H1 (cell line): ENCODE measurements at regions of chr4 and their contacts with region 1.

Region 1: DNA sequence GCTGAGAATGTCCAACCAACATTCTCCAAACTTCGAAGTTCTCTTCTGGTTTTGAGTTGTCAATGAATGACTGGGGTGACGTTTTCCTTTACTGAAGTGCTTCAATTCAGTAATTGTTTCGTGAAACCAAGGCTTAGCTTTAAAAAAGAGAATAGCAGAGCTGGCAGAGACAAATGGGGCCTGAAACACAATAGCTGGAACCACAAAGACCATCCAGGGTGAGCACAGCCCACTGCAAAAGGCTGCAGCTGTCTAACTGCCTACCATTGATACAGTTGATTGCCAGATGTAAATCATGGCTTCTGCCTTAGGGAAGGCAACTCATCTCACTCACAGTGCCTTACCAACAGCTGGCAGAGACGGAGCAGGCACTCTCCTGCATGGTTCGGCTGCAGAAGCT is 78.7 kb upstream of the ZNF518B start:
- DNase-seq: no peak
- H3K4me3 ChIP-seq: no peak overlapping the region
- H3K27ac ChIP-seq: no peak overlapping the region
- H3K4me1 ChIP-seq: peaks cover 0 to 3% (median 2%) of the 10 kb centered on the region in 4 experiments; a peak in 3 of 7 replicates
- H3K27me3 ChIP-seq: no peaks in the 10 kb centered on the region
- CTCF ChIP-seq: no peak
- EP300 ChIP-seq: no peak
- POLR2A ChIP-seq: no peak
- RAD21 ChIP-seq: no peak

Region 2: GRCh38 chr4:10151182-10151581 is 384.7 kb before region 1 on chr4:
- CTCF ChIA-PET with region 1: interaction called, 11 read pairs
- POLR2A ChIA-PET with region 1: no interaction called
- DNase-seq: no peak
- H3K4me3 ChIP-seq: no peak overlapping the region
- H3K27ac ChIP-seq: no peak overlapping the region
- H3K4me1 ChIP-seq: no peaks in the 10 kb centered on the region
- H3K27me3 ChIP-seq: no peaks in the 10 kb centered on the region; a peak in 1 of 7 replicates
- CTCF ChIP-seq: no peak
- EP300 ChIP-seq: no peak
- POLR2A ChIP-seq: no peak
- RAD21 ChIP-seq: no peak

Region 3: DNA sequence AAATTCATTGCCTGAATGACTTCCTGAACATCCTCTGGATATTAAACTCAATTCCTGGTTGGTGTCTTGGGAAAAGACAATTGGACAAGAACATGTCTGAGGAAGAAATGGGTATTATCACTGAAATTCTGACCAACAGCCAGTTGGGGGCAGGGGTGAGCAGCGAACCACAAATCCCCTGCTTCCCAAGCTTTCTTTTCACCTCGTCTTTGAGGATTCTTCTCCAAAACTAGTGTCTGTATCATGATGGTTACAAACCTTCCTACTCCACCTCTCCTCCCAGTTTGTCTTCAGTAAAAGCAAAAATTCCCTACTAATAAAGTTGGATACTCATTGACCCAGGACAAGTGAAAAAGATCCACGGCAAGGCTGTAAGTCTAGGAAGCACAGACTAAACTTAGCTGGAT is 371.0 kb before region 1 on chr4:
- CTCF ChIA-PET with region 1: interaction called, 60 read pairs
- POLR2A ChIA-PET with region 1: interaction called, 3 read pairs
- DNase-seq: peak; percentile 15 to 77
- H3K4me3 ChIP-seq: no peak overlapping the region
- H3K27ac ChIP-seq: no peak overlapping the region
- H3K4me1 ChIP-seq: no peaks in the 10 kb centered on the region
- H3K27me3 ChIP-seq: no peaks in the 10 kb centered on the region; a peak in 2 of 7 replicates
- CTCF ChIP-seq: peak; percentile 62 to 82 (median 66)
- EP300 ChIP-seq: no peak
- POLR2A ChIP-seq: no peak
- RAD21 ChIP-seq: peak; percentile 86 to 89

Region 4: GRCh38 chr4:10186228-10187214 is 349.4 kb before region 1 on chr4:
- CTCF ChIA-PET with region 1: interaction called, 10 read pairs
- POLR2A ChIA-PET with region 1: no interaction called
- DNase-seq: no peak
- H3K4me3 ChIP-seq: no peak overlapping the region
- H3K27ac ChIP-seq: no peak overlapping the region
- H3K4me1 ChIP-seq: no peaks in the 10 kb centered on the region
- H3K27me3 ChIP-seq: no peaks in the 10 kb centered on the region
- CTCF ChIP-seq: peak in 2 of 3 experiments; percentile 15 to 31; a peak in 2 of 4 replicates
- EP300 ChIP-seq: no peak
- POLR2A ChIP-seq: no peak
- RAD21 ChIP-seq: peak; percentile 24 to 42; a peak in 2 of 4 replicates

Region 5: DNA sequence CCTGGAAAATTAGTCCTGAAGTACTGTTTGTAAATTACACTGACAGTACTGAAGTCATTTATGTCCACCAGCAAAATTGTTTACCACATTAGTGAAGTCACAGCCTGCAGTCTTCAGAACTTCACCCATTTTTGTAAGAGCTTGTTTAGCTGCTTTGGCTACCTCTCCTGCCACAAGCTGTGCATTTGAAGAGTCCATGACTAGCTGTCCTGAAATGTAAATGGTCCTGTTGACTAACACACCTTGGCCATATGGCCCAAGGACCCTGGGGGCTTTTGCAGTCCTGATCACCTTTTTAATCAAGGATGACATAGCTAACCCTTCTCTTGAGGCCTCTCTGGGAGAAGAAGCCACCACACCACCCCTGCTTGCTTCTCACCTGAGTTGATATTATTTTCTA is 57.3 kb before region 1 on chr4:
- CTCF ChIA-PET with region 1: interaction called, 11 read pairs
- POLR2A ChIA-PET with region 1: no interaction called
- DNase-seq: no peak
- H3K4me3 ChIP-seq: no peak overlapping the region
- H3K27ac ChIP-seq: no peak overlapping the region
- H3K4me1 ChIP-seq: no peaks in the 10 kb centered on the region
- H3K27me3 ChIP-seq: no peaks in the 10 kb centered on the region
- CTCF ChIP-seq: no peak
- EP300 ChIP-seq: no peak
- POLR2A ChIP-seq: no peak
- RAD21 ChIP-seq: no peak

Region 6: GRCh38 chr4:10554694-10555093 is 18.8 kb after region 1 on chr4:
- CTCF ChIA-PET with region 1: interaction called, 25 read pairs
- POLR2A ChIA-PET with region 1: no interaction called
- DNase-seq: peak in 1 of 2 experiments; percentile 77
- H3K4me3 ChIP-seq: no peak overlapping the region
- H3K27ac ChIP-seq: no peak overlapping the region
- H3K4me1 ChIP-seq: no peaks in the 10 kb centered on the region
- H3K27me3 ChIP-seq: no peaks in the 10 kb centered on the region
- CTCF ChIP-seq: peak in 2 of 3 experiments; percentile 59 to 75; a peak in 3 of 4 replicates
- EP300 ChIP-seq: no peak
- POLR2A ChIP-seq: no peak
- RAD21 ChIP-seq: peak; percentile 85 to 86